ENCODE measurements at regions of chr5 and their contacts with region 1.

Region 1: GRCh38 chr5:57221049-57221568 is 47.2 kb downstream of the GPBP1 start:
- DNase-seq: no peak
- ATAC-seq: peak; percentile 72 to 78
- H3K4me3 ChIP-seq: no peak overlapping the region
- H3K27ac ChIP-seq: peak overlapping the region in 1 of 4 donors; percentile 44
- H3K4me1 ChIP-seq: no peaks in the 10 kb centered on the region
- H3K27me3 ChIP-seq: no peaks in the 10 kb centered on the region
- CTCF ChIP-seq: peak; percentile 80 to 98 (median 90)
- POLR2A ChIP-seq: no peak

Region 2: DNA sequence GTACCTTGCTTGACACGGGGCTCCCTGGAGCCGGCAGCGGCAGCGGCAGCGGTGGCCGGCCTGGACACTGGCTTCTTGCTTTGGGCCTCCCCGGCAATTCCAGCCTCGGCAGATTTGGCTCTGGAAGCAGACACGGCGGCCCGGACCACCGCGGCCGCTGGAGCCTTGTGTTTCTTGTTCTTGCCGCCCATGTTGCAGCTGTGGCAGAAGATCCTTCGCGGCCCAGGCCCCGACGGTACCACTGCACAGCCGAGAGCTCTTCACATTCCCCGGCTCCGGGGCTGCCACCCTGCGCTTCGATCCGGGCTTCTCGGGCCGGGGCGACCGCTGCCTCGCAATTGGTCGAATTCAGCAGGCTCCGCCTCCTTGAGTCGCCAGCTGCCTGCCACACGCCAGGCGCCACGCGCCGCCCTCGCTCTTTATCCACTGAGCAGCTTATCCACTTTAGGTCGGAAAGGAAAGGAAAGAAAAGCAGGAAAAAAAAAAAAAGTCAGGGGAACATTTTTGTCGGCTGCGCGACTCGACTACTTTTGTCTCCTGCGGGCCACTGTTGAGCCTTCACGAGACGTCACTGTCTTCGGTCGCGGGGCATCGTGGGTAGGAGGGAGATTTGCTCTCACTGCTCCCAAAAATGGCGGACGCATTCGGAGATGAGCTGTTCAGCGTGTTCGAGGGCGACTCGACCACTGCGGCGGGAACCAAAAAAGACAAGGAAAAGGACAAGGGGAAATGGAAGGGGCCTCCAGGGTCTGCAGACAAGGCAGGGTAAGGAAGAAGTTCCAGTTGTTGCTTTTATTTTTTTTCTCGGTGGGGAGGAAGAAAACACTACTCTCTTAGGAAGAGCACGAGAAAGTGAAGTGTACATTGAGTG is 1913.5 kb before region 1 on chr5 and contains the starts of genes DHX29 and MTREX:
- in situ Hi-C with region 1: loop called in 1 of 4 experiments (anchors 25 kb)
- intact Hi-C with region 1: no loop called
- DNase-seq: peak; percentile 84 to 86
- ATAC-seq: peak; percentile 96
- H3K4me3 ChIP-seq: peak within 1 kb of the TSS; percentile 64 to 97 (median 86)
- H3K27ac ChIP-seq: peak within 1 kb of the TSS; percentile 86 to 96 (median 95)
- H3K4me1 ChIP-seq: peaks cover 47 to 68% of the 10 kb centered on the region in 2 donors
- H3K27me3 ChIP-seq: no peaks in the 10 kb centered on the region
- CTCF ChIP-seq: no peak
- POLR2A ChIP-seq: peak; percentile 63 to 64
- total RNA-seq, gene DHX29: 33.1 to 44.6 (median 41.0) TPM
- total RNA-seq, gene MTREX: 92.4 to 124 (median 109) TPM

Region 3: DNA sequence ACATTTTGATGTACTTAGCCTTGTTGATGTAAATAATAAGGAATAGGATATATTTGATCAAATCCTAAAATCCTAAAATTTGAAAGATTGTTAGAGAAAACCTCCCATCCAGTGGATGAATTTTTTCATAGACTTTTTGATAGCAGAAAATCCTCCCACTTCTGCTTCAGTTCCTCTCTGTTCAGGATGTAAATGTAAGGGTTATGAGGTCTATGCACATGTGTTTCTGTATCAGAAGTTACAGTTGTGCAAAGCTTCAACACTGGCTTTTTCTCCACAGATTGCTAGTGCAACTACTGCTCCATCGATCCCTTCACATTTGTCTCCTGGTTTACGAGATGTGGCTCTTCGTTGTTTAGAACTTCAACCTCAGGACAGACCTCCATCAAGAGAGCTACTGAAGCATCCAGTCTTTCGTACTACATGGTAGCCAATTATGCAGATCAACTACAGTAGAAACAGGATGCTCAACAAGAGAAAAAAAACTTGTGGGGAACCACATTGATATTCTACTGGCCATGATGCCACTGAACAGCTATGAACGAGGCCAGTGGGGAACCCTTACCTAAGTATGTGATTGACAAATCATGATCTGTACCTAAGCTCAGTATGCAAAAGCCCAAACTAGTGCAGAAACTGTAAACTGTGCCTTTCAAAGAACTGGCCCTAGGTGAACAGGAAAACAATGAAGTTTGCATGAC is 327.7 kb before region 1 on chr5:
- in situ Hi-C with region 1: loop called in 1 of 4 experiments (anchors 10 kb)
- intact Hi-C with region 1: no loop called
- DNase-seq: no peak
- ATAC-seq: no peak
- H3K4me3 ChIP-seq: no peak overlapping the region
- H3K27ac ChIP-seq: no peak overlapping the region
- H3K4me1 ChIP-seq: no peaks in the 10 kb centered on the region
- H3K27me3 ChIP-seq: no peaks in the 10 kb centered on the region
- CTCF ChIP-seq: no peak
- POLR2A ChIP-seq: no peak

Region 4: GRCh38 chr5:56909294-56910209 is 311.6 kb before region 1 on chr5 and contains the start of gene SETD9:
- in situ Hi-C with region 1: loop called in 3 of 4 experiments (anchors 5 to 10 kb)
- intact Hi-C with region 1: no loop called
- DNase-seq: peak; percentile 96 to 97
- ATAC-seq: peak; percentile 85 to 91
- H3K4me3 ChIP-seq: peak within 1 kb of the TSS; percentile 67 to 96 (median 80)
- H3K27ac ChIP-seq: peak within 1 kb of the TSS; percentile 86 to 96 (median 90)
- H3K4me1 ChIP-seq: peaks cover 5 to 10% of the 10 kb centered on the region in 2 donors
- H3K27me3 ChIP-seq: no peaks in the 10 kb centered on the region
- CTCF ChIP-seq: no peak
- POLR2A ChIP-seq: peak; percentile 66 to 73
- total RNA-seq, gene SETD9: 7.0 to 29.1 (median 13.9) TPM

Region 5: GRCh38 chr5:57173185-57174127 is 47.7 kb before region 1 on chr5 and contains the start of gene GPBP1:
- in situ Hi-C with region 1: no loop called
- intact Hi-C with region 1: loop called (anchors 2 kb)
- DNase-seq: peak; percentile 96 to 98
- ATAC-seq: peak; percentile 83 to 84
- H3K4me3 ChIP-seq: peak within 1 kb of the TSS; percentile 84 to 99 (median 92)
- H3K27ac ChIP-seq: peak within 1 kb of the TSS; percentile 98 to 100 (median 100)
- H3K4me1 ChIP-seq: peaks cover 25 to 35% of the 10 kb centered on the region in 2 donors
- H3K27me3 ChIP-seq: no peaks in the 10 kb centered on the region
- CTCF ChIP-seq: peak in 1 of 5 experiments; percentile 9
- POLR2A ChIP-seq: peak; percentile 79 to 85
- total RNA-seq, gene GPBP1: 40.4 to 58.0 (median 50.5) TPM

Measured in gastrocnemius medialis (tissue), 4 donors.